T-cell (primary cell): ENCODE measurements at regions of chr9 and their contacts with region 1.

Region 1: DNA sequence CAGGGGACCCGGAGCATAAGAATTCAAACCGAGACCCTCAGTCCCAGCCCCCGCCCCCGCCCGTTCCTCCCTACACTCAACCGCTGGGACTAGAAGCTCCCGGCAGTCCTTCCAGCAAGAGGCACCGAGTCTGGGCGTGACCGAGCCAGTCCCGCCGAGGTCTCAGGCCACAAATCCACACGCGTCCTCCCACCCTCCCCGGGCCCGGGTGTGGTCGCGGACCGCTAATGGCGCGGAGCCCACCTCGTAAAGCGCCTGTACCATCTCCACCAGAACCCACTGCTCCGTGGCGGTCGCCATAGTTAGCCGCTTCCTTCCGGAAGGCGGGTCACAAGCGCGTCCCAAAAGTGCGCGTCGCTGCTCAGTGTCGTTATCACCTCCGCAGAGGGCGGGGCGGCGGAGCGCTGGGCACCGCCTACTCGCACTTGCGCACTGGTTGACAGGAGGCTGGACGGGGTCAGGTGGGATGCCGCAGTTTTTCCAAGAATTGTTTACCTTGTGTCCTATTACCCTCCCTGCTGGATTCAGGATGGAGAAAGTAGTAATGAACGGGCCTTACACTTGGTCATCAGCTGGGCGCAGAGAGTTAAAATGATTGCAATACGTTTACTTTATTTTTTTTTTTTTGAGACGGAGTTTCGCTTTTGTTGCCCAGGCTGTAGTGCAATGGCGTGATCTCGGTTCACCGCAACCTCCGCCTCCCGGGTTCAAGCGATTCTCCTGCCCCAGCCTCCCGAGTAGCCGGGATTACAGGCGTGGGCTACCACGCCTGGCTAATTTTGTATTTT is at the start of gene SPTLC1:
- DNase-seq: peak; percentile 84 to 98 (median 92)
- ATAC-seq: peak; percentile 95 to 96 (median 96)
- H3K4me3 ChIP-seq: peak within 1 kb of the TSS; percentile 82 to 89
- H3K4me3 Mint-ChIP-seq: peak within 1 kb of the TSS; percentile 94 to 99 (median 99)
- H3K27ac ChIP-seq: peak within 1 kb of the TSS; percentile 89
- H3K27ac Mint-ChIP-seq: peak within 1 kb of the TSS; percentile 98 to 100
- H3K4me1 ChIP-seq: peaks cover 13 to 14% of the 10 kb centered on the region in 2 experiments
- H3K4me1 Mint-ChIP-seq: peaks cover 39 to 46% (median 45%) of the 10 kb centered on the region in 3 donors
- H3K27me3 ChIP-seq: peaks cover 0 to 2% of the 10 kb centered on the region in 2 experiments
- H3K27me3 Mint-ChIP-seq: no peaks in the 10 kb centered on the region
- total RNA-seq, gene SPTLC1: 40.5 to 51.1 (median 46.1) TPM

Region 2: GRCh38 chr9:91599564-91599963 is 515.7 kb before region 1 on chr9:
- CTCF ChIA-PET with region 1: no interaction called
- POLR2A ChIA-PET with region 1: no interaction called
- DNase-seq: no peak
- ATAC-seq: no peak
- H3K4me3 ChIP-seq: no peak overlapping the region
- H3K4me3 Mint-ChIP-seq: no peak overlapping the region
- H3K27ac ChIP-seq: no peak overlapping the region
- H3K27ac Mint-ChIP-seq: no peak overlapping the region
- H3K4me1 ChIP-seq: no peaks in the 10 kb centered on the region
- H3K4me1 Mint-ChIP-seq: no peaks in the 10 kb centered on the region
- H3K27me3 ChIP-seq: peaks cover 0 to 8% of the 10 kb centered on the region in 2 experiments
- H3K27me3 Mint-ChIP-seq: peaks cover 22 to 40% of the 10 kb centered on the region in 2 donors

Region 3: GRCh38 chr9:92097997-92098482 is 17.2 kb before region 1 on chr9:
- CTCF ChIA-PET with region 1: no interaction called
- POLR2A ChIA-PET with region 1: no interaction called
- DNase-seq: peak in 30 of 35 experiments; percentile 9 to 68 (median 38)
- ATAC-seq: peak in 2 of 4 experiments; percentile 36 to 58
- H3K4me3 ChIP-seq: no peak overlapping the region
- H3K4me3 Mint-ChIP-seq: peak overlapping the region; percentile 48 to 65 (median 52)
- H3K27ac ChIP-seq: no peak overlapping the region
- H3K27ac Mint-ChIP-seq: peak overlapping the region in 1 of 2 donors; percentile 77
- H3K4me1 ChIP-seq: peaks cover 0 to 2% of the 10 kb centered on the region in 2 experiments
- H3K4me1 Mint-ChIP-seq: peaks cover 48 to 65% (median 64%) of the 10 kb centered on the region in 3 donors
- H3K27me3 ChIP-seq: no peaks in the 10 kb centered on the region
- H3K27me3 Mint-ChIP-seq: no peaks in the 10 kb centered on the region

Region 4: DNA sequence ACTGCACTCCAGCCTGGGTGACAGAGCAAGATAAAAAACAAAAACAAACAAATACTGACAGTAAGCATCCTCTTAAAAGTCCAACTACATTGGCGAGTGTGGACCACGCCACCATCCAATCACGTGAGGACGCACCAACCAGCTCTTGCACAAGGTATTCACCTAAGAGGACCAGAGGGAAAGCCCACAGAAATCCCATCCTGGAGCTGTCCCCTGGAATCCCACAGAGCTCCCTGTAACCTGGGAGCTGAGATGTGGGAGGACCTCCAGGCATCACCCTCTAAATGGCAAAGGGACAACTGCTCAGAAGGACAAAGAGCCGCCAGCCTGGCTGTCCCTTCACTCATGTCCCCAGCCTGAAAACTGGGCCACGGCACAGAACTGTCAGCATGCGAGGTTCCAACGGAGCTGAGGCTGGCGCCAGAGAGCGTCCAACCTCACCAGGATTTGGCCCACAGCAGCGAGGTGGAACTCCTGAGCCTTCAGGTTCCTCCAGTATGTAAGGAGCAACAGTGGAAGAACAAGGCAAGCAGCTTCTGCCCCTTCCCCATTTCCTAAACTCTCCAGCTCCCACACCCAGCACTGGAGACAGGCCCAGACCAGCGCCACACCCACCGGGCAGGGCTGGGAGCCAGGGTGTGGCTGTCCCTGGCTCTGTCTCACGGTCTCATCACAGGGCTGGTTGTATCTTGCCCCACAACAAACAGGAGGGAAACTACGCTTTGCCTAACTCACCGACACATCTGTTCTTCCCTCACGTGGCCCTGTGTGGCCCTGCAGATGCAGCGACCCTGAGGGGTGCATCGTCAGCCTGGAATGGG is 539.4 kb after region 1 on chr9:
- CTCF ChIA-PET with region 1: no interaction called
- POLR2A ChIA-PET with region 1: interaction called in 1 of 2 experiments, 11 read pairs
- DNase-seq: no peak
- ATAC-seq: no peak
- H3K4me3 ChIP-seq: no peak overlapping the region
- H3K4me3 Mint-ChIP-seq: no peak overlapping the region
- H3K27ac ChIP-seq: no peak overlapping the region
- H3K27ac Mint-ChIP-seq: no peak overlapping the region
- H3K4me1 ChIP-seq: no peaks in the 10 kb centered on the region
- H3K4me1 Mint-ChIP-seq: peaks cover 0 to under 1% (median 0%) of the 10 kb centered on the region in 3 donors
- H3K27me3 ChIP-seq: no peaks in the 10 kb centered on the region
- H3K27me3 Mint-ChIP-seq: no peaks in the 10 kb centered on the region